ENCODE measurements at regions of chr5 and their contacts with region 1.

Region 1: DNA sequence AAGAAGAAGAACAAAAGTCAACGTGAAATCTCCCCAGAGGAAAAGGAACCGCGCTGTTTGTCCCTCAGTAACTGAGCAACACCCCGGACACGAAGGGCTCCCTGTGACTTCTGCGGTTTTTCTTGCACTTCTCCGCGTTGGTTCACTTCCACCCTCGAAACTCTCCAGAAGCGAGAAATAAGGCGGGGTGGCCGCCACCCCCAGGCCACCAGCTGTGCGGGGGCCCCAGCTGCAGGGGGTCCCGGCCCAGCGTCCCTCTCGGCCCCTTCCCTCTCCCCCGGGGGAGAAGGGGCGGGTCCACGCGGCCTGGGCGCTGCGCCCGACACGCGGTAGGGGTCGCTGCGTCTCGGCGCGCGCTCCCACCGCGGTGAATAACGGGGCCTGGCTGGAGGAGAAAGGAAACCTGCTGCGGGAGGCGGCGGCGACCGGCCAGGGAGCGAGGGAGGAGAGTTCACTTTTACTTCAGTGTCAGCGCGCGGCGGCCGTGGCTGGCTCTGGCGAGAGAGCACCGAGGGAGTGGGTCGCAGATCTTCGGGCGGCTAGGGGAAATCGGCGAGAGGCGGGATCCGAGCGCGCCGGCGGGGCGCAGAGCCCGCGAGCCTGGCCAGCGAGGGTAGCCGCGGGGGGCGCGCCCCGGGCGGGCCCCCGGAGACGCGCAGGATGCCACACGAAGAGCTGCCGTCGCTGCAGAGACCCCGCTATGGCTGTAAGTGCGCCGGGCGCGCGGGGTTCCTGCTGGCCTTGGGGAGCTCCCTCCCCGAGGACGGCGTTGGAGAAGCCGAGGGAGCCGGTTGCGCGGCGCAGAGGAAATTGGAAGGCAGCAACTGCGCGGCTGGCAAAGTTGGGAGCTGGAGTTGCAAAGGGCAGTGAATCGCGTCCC is at the start of gene IQGAP2:
- DNase-seq: peak; percentile 80
- H3K4me3 Mint-ChIP-seq: peak within 1 kb of the TSS; percentile 95
- H3K27ac Mint-ChIP-seq: peak within 1 kb of the TSS; percentile 94
- H3K4me1 Mint-ChIP-seq: peaks cover 43% of the 10 kb centered on the region
- H3K27me3 Mint-ChIP-seq: peaks cover 14% of the 10 kb centered on the region
- total RNA-seq, gene IQGAP2: 28.3 and 29.5 TPM in 2 replicates

Region 2: GRCh38 chr5:75336625-75337339 is 1066.3 kb before region 1 on chr5 and contains the start of gene HMGCR:
- intact Hi-C with region 1: loop called (anchors 5 kb)
- DNase-seq: peak; percentile 97
- H3K4me3 Mint-ChIP-seq: no peak within 1 kb of the TSS
- H3K27ac Mint-ChIP-seq: no peak within 1 kb of the TSS
- H3K4me1 Mint-ChIP-seq: peaks cover 33% of the 10 kb centered on the region
- H3K27me3 Mint-ChIP-seq: no peaks in the 10 kb centered on the region
- total RNA-seq, gene HMGCR: 122 and 123 TPM in 2 replicates

Region 3: DNA sequence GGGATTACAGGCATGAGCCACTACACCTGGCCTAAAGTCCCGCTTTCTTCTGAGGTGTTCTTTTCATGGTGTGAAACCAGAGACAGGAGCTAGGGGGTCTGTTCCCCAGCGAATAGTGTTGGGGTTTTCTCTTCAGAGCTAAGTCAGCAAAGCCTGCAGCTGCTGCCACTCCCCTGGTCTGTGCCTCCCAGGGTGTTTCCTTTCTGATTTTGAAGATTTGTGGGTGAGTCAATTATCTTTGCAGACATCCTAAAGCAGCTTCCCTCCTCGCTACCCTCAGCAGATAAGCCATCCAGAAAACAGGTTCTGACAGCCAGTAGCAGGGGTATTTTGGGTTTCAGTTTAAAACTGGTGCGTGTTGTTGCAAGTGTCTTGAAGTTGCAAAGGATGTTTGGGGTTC is 72.0 kb before region 1 on chr5:
- intact Hi-C with region 1: loop called (anchors 2 kb)
- DNase-seq: peak; percentile 58
- H3K4me3 Mint-ChIP-seq: peak overlapping the region; percentile 37
- H3K27ac Mint-ChIP-seq: peak overlapping the region; percentile 69
- H3K4me1 Mint-ChIP-seq: peaks cover 64% of the 10 kb centered on the region
- H3K27me3 Mint-ChIP-seq: no peaks in the 10 kb centered on the region

Region 4: DNA sequence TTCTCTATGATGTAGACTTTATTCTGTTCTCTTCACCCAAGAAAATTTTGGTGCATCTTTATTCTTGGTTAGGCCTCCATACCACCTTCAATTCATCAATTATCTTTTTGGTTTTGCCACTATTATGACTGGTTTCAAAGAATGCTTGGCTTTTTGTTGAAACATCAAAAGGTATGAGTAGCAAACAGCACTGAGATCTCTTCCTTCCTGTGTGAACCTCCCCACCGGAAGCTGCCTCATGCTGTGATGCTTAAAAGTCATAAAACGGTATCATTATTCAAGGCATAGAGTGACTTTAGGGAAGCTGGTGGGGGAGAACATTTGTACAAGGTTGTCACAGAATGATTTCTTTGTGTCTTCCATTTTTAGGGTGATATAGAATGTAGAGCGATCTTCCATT is 70.5 kb after region 1 on chr5:
- intact Hi-C with region 1: loop called (anchors 2 kb)
- DNase-seq: peak; percentile 49
- H3K4me3 Mint-ChIP-seq: peak overlapping the region; percentile 30
- H3K27ac Mint-ChIP-seq: peak overlapping the region; percentile 80
- H3K4me1 Mint-ChIP-seq: peaks cover 48% of the 10 kb centered on the region
- H3K27me3 Mint-ChIP-seq: no peaks in the 10 kb centered on the region

Region 5: DNA sequence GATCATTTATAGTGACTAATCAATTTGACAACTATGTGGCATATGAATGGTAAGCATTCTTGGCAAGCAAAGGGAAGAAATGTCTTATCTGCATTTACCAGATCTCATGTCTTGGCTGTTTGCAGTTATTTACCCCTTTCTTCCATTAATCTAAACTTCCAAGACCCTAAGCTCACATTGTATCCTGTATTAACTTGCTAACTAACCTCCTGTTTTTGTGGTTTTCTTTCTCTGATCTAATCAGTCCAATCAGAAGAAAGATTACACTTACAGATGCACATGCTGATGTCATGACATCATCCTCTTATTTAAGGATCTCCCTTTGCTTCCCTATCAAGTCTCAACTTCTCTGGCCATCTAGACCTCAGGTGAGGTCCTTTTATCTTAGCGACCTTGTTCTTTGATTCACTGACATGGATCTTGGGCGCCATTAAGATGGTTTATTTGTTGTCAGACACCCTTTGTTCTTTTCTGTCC is 124.6 kb after region 1 on chr5:
- intact Hi-C with region 1: no loop called
- DNase-seq: no peak
- H3K4me3 Mint-ChIP-seq: no peak overlapping the region
- H3K27ac Mint-ChIP-seq: no peak overlapping the region
- H3K4me1 Mint-ChIP-seq: peaks cover 57% of the 10 kb centered on the region
- H3K27me3 Mint-ChIP-seq: no peaks in the 10 kb centered on the region

Region 6: DNA sequence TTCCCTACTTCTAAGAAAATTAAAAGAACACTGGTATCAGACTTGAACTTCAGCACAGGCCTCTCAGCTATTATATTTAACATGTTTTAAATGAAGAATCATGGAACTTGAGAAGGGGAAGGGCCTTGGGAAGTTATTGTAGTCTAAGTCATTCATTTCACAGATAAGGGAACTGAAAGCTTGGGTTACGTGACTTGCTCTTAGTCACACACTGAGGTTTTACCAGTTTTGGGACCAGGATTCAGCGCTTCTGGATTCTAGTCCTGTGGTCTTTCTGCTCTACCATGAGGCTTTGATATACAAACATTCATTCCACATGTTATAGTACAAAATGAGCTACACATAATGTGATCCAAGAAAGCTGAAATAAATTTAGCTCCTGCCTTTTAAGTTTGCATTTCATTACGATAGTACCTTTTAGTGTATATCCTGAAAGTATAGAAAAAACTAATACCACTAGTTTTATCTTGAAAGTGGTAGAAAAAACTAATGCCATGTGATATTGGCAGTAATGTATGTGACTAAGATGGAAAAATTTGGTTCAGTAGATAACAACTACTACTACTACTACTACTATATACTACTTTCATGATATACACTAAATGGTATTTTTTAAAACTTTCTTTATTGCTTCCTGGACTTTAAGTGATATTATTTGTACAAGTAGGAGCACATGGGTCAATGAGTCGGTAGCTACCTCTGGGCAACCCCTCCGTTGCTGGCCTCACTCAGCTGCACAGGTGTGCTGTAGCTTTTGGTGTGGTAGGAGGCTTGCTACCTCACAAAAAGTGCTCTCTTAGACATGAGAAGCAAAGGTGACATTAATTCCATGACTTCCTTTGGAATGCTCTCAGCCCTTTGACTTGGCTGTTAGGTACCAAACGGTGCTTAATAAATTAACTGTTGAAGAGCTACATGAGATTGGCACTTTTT is 179.4 kb after region 1 on chr5:
- intact Hi-C with region 1: loop called (anchors 1 kb)
- DNase-seq: no peak
- H3K4me3 Mint-ChIP-seq: no peak overlapping the region
- H3K27ac Mint-ChIP-seq: peak overlapping the region; percentile 69
- H3K4me1 Mint-ChIP-seq: peaks cover 26% of the 10 kb centered on the region
- H3K27me3 Mint-ChIP-seq: no peaks in the 10 kb centered on the region

Region 7: DNA sequence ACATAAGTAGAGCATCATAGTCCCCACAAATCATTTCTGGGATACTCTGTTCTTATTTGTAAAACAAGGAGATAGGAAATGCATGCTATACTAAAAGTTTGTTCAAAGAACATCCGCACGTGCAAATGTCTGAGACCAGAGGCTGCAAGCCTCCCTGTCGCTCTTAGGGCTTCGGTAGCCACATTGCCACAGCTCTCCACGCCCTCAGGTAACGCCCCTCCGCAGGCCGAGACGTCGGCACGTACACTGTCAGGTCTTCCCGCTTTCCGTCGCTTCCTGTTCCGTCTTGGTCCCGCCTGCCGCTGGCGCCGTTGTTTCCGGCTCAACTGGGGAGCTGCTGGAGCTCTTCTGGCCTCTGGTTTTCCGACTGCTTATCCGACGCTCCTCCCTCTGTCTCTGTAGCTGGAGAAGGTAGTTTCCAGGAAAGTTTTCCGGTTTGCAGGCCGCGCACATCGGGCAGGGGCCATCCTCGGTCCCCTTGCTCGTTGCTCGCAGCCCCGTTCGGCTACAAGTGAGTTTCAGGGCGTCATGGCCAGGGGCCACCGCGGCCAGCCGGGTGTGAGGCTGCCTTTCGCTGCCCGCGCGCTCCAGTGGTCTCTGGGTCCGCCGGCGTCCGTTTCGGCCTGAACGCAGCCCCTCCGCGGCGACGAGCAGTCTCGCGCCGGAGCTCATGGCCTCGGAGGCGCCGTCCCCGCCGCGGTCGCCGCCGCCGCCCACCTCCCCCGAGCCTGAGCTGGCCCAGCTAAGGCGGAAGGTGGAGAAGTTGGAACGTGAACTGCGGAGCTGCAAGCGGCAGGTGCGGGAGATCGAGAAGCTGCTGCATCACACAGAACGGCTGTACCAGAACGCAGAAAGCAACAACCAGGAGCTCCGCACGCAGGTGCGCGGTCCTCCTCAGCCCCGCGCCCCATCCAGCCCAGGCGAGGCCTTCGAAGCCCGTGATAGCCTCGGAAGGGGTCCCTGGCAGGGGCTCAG is 627.3 kb after region 1 on chr5 and contains the start of gene AGGF1:
- intact Hi-C with region 1: loop called (anchors 10 kb)
- DNase-seq: peak; percentile 90
- H3K4me3 Mint-ChIP-seq: peak within 1 kb of the TSS; percentile 98
- H3K27ac Mint-ChIP-seq: peak within 1 kb of the TSS; percentile 92
- H3K4me1 Mint-ChIP-seq: peaks cover 22% of the 10 kb centered on the region
- H3K27me3 Mint-ChIP-seq: peaks cover 7% of the 10 kb centered on the region
- total RNA-seq, gene AGGF1: 25.6 and 28.2 TPM in 2 replicates